Activated naive CD8-positive, alpha-beta T cell treated with anti-CD3 and anti-CD28 coated beads, Interleukin-2, amount 10 ng/mL, durations not matched to agents 7 days and 5 days (primary cell): ENCODE measurements at regions of chr20 and their contacts with region 1.

Region 1: DNA sequence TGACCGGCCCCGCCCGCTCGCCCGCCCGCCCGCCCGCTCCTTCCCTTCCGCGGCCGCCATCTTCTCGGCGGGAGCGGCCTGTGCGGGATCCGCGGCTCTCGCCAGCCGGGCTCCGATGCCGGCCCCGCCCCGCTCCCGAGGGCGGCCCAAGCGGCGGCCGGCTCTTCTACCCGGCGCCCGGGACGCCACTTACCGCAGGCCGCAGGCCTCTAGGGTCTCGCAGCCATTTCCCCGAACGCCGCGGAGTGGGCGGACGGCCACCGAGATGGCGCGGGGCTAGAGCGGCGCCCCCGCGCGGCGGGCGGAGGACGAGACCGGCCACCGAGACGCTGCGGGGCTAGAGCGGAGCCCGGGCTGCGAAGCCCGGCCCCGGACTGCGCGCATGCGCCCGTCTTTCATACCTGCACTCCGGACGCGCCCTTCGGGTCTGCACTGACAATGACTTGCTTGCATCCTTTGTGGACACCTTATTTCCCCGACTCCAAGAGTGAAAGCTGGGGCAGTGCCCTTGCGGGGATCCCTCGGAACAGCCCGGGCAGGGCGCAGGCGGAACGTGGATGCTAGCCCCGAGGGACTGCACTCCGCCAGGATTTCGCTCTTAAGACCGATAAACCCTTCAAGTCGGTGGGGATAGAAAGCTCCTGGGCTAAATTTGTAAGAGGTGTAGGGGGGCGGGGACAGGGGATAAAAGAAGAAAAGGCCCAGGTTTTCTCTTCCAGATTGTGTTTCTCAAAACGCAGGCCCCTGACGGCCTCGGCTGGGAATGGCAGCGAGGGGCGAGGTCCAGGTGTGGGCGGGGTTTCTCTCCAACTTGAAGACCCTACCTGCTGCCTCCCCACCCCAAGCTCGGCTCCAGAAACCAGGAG is at the start of gene DIDO1:
- DNase-seq: peak; percentile 93
- ATAC-seq: peak; percentile 80
- H3K4me3 Mint-ChIP-seq: peak within 1 kb of the TSS; percentile 93
- H3K27ac Mint-ChIP-seq: peak within 1 kb of the TSS; percentile 94
- H3K4me1 Mint-ChIP-seq: peaks cover 53% of the 10 kb centered on the region
- H3K27me3 Mint-ChIP-seq: no peaks in the 10 kb centered on the region
- total RNA-seq, gene DIDO1: 100 to 104 TPM

Region 2: DNA sequence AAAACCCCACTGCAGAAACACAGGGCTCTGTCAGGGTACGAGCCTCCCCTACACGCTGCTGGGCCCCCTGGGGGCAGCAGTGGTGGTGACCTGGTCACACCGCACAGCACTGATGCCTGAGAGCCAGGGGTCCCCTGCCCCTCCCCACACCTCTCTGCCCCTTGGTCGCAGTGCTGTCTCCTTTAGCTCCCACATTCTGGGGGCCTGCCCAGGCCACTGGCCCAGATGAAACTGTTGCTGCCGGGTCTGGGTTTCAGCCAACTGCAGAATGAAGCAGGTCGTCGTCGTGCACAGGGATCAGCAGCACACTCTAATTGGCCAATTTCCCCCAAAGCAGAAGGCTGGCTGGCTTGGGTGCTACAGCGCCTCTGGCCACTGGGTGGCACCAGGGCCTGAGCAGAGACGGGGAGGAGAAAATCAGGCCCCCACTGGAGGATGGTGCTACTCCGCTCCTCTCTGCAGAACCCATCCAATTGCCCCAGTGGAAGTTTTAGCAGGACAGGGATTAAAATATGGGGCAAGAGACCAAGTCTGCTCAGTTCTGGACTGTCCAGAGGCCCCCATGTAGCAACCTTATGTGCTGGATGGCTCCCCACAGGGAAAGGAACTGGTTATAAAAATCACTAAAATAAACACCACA is 26.3 kb before region 1 on chr20:
- POLR2A ChIA-PET with region 1: interaction called, 15 read pairs
- DNase-seq: peak; percentile 78
- ATAC-seq: peak; percentile 90
- H3K4me3 Mint-ChIP-seq: peak overlapping the region; percentile 70
- H3K27ac Mint-ChIP-seq: peak overlapping the region; percentile 92
- H3K4me1 Mint-ChIP-seq: peaks cover 37% of the 10 kb centered on the region
- H3K27me3 Mint-ChIP-seq: no peaks in the 10 kb centered on the region

Region 3: GRCh38 chr20:62907384-62908317 is 18.8 kb before region 1 on chr20:
- POLR2A ChIA-PET with region 1: interaction called, 55 read pairs
- DNase-seq: no peak
- ATAC-seq: peak; percentile 53
- H3K4me3 Mint-ChIP-seq: no peak overlapping the region
- H3K27ac Mint-ChIP-seq: peak overlapping the region; percentile 42
- H3K4me1 Mint-ChIP-seq: peaks cover 22% of the 10 kb centered on the region
- H3K27me3 Mint-ChIP-seq: no peaks in the 10 kb centered on the region

Region 4: DNA sequence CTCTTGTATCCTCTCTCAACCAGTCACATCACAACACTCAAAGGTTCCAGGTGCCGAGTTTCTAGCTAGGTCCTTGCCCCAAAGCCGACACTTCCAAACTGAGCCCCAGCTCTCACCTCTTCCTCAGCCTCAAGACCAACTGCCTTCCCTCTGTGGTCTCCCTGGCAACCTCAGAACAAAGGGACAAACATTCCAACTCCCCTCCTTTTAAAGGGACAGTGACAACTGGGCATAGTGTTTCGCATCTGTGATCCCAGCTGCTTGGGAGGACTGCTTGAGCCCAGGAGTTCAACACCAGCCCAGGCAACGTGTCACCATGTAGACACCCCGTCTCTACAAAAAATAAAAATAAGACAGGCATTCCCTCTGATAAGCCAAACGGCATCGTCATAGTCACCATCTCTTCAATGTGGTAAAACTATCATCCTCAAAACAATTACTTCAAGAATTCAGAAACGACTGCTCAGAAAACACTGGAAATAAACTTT is 11.5 kb before region 1 on chr20:
- POLR2A ChIA-PET with region 1: interaction called, 55 read pairs
- DNase-seq: no peak
- ATAC-seq: no peak
- H3K4me3 Mint-ChIP-seq: peak overlapping the region; percentile 80
- H3K27ac Mint-ChIP-seq: peak overlapping the region; percentile 78
- H3K4me1 Mint-ChIP-seq: peaks cover 55% of the 10 kb centered on the region
- H3K27me3 Mint-ChIP-seq: no peaks in the 10 kb centered on the region

Region 5: GRCh38 chr20:62937366-62938104 is 11.1 kb after region 1 on chr20:
- POLR2A ChIA-PET with region 1: interaction called, 85 read pairs
- DNase-seq: peak; percentile 99
- ATAC-seq: peak; percentile 85
- H3K4me3 Mint-ChIP-seq: no peak overlapping the region
- H3K27ac Mint-ChIP-seq: peak overlapping the region; percentile 97
- H3K4me1 Mint-ChIP-seq: peaks cover 25% of the 10 kb centered on the region
- H3K27me3 Mint-ChIP-seq: no peaks in the 10 kb centered on the region

Region 6: DNA sequence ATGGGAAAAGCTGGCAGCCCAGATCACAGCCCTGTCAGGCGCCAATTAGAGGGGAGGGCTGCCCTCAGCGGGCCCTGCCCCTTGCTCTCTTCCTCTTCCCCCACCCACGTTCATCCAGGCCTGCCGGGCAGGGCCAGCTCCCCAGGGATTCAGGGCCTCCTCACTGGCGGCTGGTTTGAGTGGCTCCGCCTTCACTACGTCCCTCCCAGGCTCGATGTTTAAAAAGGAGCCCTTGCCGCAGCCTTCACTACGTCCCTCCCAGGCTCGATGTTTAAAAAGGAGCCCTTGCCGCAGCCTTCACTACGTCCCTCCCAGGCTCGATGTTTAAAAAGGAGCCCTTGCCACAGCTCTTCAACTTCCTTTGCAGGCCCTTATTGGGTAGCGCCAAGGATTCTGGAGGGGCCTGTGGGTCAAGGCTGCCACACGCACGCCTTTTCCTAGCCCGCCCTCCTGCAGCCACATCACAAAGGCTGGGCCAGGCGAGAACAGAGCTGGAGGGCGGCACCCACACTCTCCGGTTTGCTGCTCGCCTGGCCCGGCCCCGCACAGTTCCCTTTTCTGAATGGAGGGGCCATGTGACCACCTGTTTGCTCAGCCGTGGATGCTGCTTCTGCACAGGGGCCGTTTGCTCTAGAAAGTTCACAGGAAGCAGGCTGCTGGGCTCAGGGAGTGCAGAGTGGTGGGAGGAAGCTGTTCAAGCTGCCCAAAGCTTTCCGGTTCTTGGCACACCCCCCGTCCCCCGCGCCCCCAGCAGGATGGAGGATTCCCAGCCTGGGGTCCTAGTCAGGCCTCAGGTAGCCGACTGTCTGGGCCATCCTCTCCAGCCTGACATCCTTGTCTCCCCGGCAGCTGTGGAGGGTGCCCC is 27.6 kb after region 1 on chr20:
- POLR2A ChIA-PET with region 1: interaction called, 25 read pairs
- DNase-seq: peak; percentile 85
- ATAC-seq: peak; percentile 93
- H3K4me3 Mint-ChIP-seq: peak overlapping the region; percentile 85
- H3K27ac Mint-ChIP-seq: peak overlapping the region; percentile 93
- H3K4me1 Mint-ChIP-seq: peaks cover 21% of the 10 kb centered on the region
- H3K27me3 Mint-ChIP-seq: no peaks in the 10 kb centered on the region

Region 7: GRCh38 chr20:62964700-62965099 is 38.2 kb after region 1 on chr20:
- POLR2A ChIA-PET with region 1: no interaction called
- DNase-seq: no peak
- ATAC-seq: no peak
- H3K4me3 Mint-ChIP-seq: no peak overlapping the region
- H3K27ac Mint-ChIP-seq: no peak overlapping the region
- H3K4me1 Mint-ChIP-seq: peaks cover 4% of the 10 kb centered on the region
- H3K27me3 Mint-ChIP-seq: no peaks in the 10 kb centered on the region

Region 8: DNA sequence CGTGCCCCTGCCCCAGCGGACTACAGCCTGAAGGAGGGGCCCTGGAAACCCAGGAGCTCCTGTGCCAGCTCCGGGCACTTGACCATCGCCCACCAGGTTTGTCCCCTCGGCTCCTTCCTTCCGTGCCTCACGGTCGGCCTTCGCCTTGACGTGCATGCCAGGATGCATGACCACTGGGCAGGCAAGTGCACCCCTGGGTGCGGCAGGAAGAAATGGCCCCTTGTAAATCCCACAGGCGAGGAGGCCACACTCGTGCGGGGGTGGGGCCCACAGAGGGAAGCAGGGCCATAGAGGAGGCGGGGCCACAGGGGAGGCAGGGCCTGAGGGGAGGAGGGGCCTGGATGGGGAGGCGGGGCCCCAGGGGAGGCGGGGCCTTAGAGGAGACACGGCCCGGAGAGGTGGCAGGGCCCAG is 207.7 kb after region 1 on chr20:
- POLR2A ChIA-PET with region 1: no interaction called
- DNase-seq: peak; percentile 28
- ATAC-seq: no peak
- H3K4me3 Mint-ChIP-seq: no peak overlapping the region
- H3K27ac Mint-ChIP-seq: no peak overlapping the region
- H3K4me1 Mint-ChIP-seq: no peaks in the 10 kb centered on the region
- H3K27me3 Mint-ChIP-seq: peaks cover 3% of the 10 kb centered on the region

Region 9: GRCh38 chr20:63425846-63426485 is 499.5 kb after region 1 on chr20:
- POLR2A ChIA-PET with region 1: no interaction called
- DNase-seq: no peak
- ATAC-seq: no peak
- H3K4me3 Mint-ChIP-seq: no peak overlapping the region
- H3K27ac Mint-ChIP-seq: no peak overlapping the region
- H3K4me1 Mint-ChIP-seq: no peaks in the 10 kb centered on the region
- H3K27me3 Mint-ChIP-seq: no peaks in the 10 kb centered on the region